Gastrocnemius medialis (tissue), 4 donors: ENCODE measurements at regions of chr3 and their contacts with region 1.

Region 1: GRCh38 chr3:18758047-18758704 is 333.0 kb upstream of the SATB1 start:
- DNase-seq: no peak
- ATAC-seq: no peak
- H3K4me3 ChIP-seq: no peak overlapping the region
- H3K27ac ChIP-seq: no peak overlapping the region
- H3K4me1 ChIP-seq: no peaks in the 10 kb centered on the region
- H3K27me3 ChIP-seq: no peaks in the 10 kb centered on the region
- CTCF ChIP-seq: no peak
- POLR2A ChIP-seq: no peak

Region 2: GRCh38 chr3:18559331-18559842 is 198.8 kb before region 1 on chr3:
- in situ Hi-C with region 1: loop called in 1 of 4 experiments (anchors 25 kb)
- intact Hi-C with region 1: no loop called
- DNase-seq: no peak
- ATAC-seq: peak in 1 of 2 donors; percentile 45
- H3K4me3 ChIP-seq: no peak overlapping the region
- H3K27ac ChIP-seq: no peak overlapping the region
- H3K4me1 ChIP-seq: peaks cover 0 to 3% of the 10 kb centered on the region in 2 donors
- H3K27me3 ChIP-seq: no peaks in the 10 kb centered on the region
- CTCF ChIP-seq: peak in 4 of 5 experiments; percentile 27 to 46 (median 32)
- POLR2A ChIP-seq: no peak